ENCODE measurements at regions of chr1 and their contacts with region 1.

Region 1: GRCh38 chr1:159214149-159214760 is 9.6 kb downstream of the ACKR1 start:
- DNase-seq: no peak
- H3K4me3 ChIP-seq: no peak overlapping the region
- H3K27ac ChIP-seq: no peak overlapping the region
- H3K4me1 ChIP-seq: peaks cover 0 to 3% (median 0%) of the 10 kb centered on the region in 4 donors
- H3K27me3 ChIP-seq: peaks cover 0 to 50% of the 10 kb centered on the region in 2 donors
- CTCF ChIP-seq: peak; percentile 72 to 84

Region 2: GRCh38 chr1:157963713-157964112 is 1250.5 kb before region 1 on chr1:
- intact Hi-C with region 1: loop called (anchors 5 kb)
- DNase-seq: peak; percentile 42 to 72
- H3K4me3 ChIP-seq: no peak overlapping the region
- H3K27ac ChIP-seq: no peak overlapping the region
- H3K4me1 ChIP-seq: peaks cover 0 to 6% (median under 1%) of the 10 kb centered on the region in 4 donors
- H3K27me3 ChIP-seq: peaks cover 0 to 21% of the 10 kb centered on the region in 2 donors
- CTCF ChIP-seq: peak; percentile 81 to 92

Measured in tibial artery (tissue), 4 donors.